Activated T-helper 1 cell treated with anti-CD3 and anti-CD28 coated beads, Interleukin-12 subunit alpha, Interleukin-12 subunit beta, Interleukin-2, Interleukin-4 antibody, amounts not matched to agents 30 ng/mL and 10 ng/mL and 1 ng/mL, durations not matched to agents 14 hours and 24 hours and 36 hours (primary cell): ENCODE measurements at regions of chr1 and their contacts with region 1.

Region 1: DNA sequence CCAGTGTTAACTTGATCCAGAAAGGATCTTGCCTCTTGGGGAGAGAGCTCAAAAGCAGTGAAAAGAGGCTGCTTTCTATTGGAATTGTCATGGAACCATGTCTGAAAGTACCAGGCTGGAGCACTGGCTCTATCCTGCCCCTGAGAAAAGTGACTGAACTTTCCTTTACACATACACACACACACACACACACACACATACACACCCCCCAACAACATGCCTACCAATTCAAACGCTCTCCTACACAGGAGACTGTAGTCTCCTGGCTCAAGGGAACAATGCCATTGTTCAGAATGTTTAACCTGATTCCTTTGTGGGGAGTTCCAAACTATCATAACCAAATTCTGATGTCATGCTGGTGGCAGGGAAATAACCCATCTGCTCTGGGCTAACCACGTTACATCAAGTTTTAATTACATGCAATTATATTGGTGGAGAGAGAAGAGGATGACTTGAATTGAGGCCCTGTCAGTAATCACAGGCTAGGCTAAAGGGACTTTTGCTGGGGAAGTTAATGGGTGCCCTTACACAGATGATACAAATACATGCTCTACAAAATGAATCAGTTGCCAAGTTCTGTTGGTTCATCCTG is 52.3 kb upstream of the DUSP10 start:
- DNase-seq: peak; percentile 32
- H3K4me3 Mint-ChIP-seq: peak overlapping the region; percentile 35
- H3K27ac Mint-ChIP-seq: peak overlapping the region; percentile 91
- H3K4me1 Mint-ChIP-seq: peaks cover 41% of the 10 kb centered on the region
- H3K27me3 Mint-ChIP-seq: no peaks in the 10 kb centered on the region

Region 2: GRCh38 chr1:221708987-221709386 is 85.2 kb before region 1 on chr1:
- intact Hi-C with region 1: loop called (anchors 1 kb)
- DNase-seq: peak; percentile 50
- H3K4me3 Mint-ChIP-seq: no peak overlapping the region
- H3K27ac Mint-ChIP-seq: peak overlapping the region; percentile 92
- H3K4me1 Mint-ChIP-seq: peaks cover 78% of the 10 kb centered on the region
- H3K27me3 Mint-ChIP-seq: no peaks in the 10 kb centered on the region

Region 3: DNA sequence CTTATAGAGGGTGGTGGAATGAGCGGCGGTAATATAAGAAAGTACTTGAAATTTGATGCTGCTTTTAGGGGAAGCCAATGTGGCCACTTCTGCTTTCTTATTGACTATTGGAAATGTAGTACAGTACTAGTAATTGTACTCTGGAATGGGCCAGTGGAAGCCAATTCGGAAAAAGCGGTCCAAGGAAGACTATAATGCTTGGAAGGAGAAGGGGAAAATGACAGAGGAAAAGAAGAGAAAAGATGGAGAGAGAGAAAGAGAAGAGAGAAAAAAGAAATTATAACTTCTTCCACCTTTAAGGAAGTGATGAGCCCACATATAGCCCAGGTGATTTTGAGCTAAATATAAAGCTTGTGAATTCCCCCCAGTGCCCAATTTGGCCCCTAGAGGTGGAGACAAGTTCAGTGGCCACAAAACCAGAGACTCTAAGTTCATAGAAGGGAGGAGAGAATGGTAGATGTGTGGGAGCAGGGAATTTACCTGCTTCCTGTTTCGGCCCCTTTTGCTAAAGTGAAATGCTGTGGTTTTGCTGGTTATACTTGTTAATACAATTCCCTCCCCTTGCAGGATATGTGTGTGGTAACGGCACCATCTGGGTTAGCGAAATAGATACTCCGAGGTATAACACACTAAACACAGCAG is 16.6 kb before region 1 on chr1:
- intact Hi-C with region 1: loop called (anchors 1 kb)
- DNase-seq: peak; percentile 55
- H3K4me3 Mint-ChIP-seq: peak overlapping the region; percentile 79
- H3K27ac Mint-ChIP-seq: peak overlapping the region; percentile 98
- H3K4me1 Mint-ChIP-seq: peaks cover 92% of the 10 kb centered on the region
- H3K27me3 Mint-ChIP-seq: no peaks in the 10 kb centered on the region

Region 4: DNA sequence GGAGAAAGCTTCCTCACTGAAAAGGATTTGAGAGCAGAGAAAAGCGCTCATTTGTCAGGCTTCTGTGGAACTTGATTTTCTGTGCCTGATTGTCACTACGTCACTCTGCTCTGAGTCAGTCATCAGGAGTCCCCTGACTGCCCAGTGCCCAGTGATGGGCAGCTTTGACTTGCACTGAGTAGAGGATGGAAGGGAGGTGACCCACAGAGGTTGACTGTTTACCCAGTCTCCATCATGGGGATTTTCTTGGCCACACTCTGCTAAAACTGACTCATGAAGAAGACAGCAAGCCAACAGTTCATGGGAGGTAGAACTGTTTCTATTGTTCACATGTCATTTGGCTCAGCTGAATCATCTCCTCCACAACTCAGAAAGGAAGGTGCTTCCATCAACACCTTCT is 29.9 kb after region 1 on chr1:
- intact Hi-C with region 1: loop called (anchors 1 kb)
- DNase-seq: no peak
- H3K4me3 Mint-ChIP-seq: no peak overlapping the region
- H3K27ac Mint-ChIP-seq: peak overlapping the region; percentile 24
- H3K4me1 Mint-ChIP-seq: peaks cover 65% of the 10 kb centered on the region
- H3K27me3 Mint-ChIP-seq: peaks cover 8% of the 10 kb centered on the region

Region 5: DNA sequence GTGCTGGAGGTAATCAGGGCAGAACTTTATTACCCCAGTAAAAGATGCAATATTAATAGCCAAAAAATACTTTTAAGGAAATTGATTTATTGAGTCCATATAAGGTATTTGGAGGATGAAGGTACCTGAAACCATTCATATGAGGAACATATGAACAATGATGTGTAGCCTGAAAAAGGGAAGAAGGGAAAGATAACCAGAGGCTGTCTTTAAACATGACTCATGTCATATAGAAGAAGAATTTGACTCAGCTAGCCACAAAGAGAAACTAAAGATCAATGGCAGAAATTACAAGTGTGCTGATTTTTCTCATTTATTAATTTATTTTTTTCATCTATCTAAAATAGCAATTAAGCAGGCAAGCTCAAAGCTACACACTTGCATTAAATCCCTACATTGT is 84.0 kb after region 1 on chr1:
- intact Hi-C with region 1: loop called (anchors 1 kb)
- DNase-seq: no peak
- H3K4me3 Mint-ChIP-seq: no peak overlapping the region
- H3K27ac Mint-ChIP-seq: no peak overlapping the region
- H3K4me1 Mint-ChIP-seq: peaks cover 11% of the 10 kb centered on the region
- H3K27me3 Mint-ChIP-seq: peaks cover 5% of the 10 kb centered on the region

Region 6: DNA sequence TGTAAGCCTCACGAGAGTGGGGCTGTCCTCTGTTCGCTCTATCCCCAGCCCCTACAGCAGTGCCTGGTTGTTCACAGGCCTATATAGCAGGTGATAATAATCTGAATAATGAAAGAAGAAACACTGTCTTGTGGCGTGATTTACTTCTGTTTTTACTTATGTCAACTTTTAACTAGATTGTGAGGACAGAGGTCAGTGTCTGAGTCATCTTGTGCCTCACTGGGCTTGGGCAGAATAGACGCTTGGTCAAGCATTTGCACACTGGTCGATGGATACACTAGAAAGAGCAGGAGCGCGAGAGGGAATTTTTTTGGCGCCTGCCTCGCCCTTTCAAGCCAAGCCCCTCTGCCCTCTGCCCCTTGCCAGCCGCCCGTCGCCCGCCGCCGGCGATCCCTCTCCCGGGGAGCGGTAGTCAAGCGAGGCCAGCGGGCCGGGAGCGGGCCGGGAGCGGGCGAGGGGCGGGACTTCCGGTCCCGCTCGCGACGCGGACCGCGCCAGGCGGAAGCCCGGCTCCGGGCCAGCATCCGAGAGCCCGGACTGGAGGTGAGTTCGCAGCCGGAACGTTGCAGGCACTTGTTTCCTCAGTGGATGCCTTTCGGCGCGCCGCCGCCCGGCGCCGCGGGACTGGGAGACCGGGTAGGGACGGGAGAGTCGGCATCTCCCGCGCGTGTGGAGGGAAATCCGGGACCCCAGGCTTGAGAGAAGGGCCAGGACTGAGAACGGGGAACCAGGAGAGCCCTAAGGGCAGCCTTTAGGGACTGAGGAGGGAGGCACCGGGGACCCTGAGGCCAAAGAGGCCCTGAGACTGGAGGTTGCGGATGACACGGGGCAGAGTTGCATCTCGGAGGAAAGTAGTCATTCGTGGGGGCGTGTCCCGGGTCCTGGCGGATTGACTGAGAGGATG is 1020.6 kb after region 1 on chr1 and contains the start of gene DISP1:
- intact Hi-C with region 1: loop called (anchors 10 kb)
- DNase-seq: peak; percentile 68
- H3K4me3 Mint-ChIP-seq: peak within 1 kb of the TSS; percentile 90
- H3K27ac Mint-ChIP-seq: peak within 1 kb of the TSS; percentile 93
- H3K4me1 Mint-ChIP-seq: peaks cover 33% of the 10 kb centered on the region
- H3K27me3 Mint-ChIP-seq: peaks cover 12% of the 10 kb centered on the region
- total RNA-seq, gene DISP1: 1.0 and 1.2 TPM in 2 replicates